AG04450 (cell line): ENCODE measurements at regions of chr12 and their contacts with region 1.

Region 1: GRCh38 chr12:52884526-52885293 is 20.2 kb downstream of the KRT8 start:
- DNase-seq: no peak
- H3K4me3 ChIP-seq: no peak overlapping the region
- H3K27ac ChIP-seq: no peak overlapping the region
- H3K27me3 ChIP-seq: no peaks in the 10 kb centered on the region
- CTCF ChIP-seq: peak; percentile 96

Region 2: DNA sequence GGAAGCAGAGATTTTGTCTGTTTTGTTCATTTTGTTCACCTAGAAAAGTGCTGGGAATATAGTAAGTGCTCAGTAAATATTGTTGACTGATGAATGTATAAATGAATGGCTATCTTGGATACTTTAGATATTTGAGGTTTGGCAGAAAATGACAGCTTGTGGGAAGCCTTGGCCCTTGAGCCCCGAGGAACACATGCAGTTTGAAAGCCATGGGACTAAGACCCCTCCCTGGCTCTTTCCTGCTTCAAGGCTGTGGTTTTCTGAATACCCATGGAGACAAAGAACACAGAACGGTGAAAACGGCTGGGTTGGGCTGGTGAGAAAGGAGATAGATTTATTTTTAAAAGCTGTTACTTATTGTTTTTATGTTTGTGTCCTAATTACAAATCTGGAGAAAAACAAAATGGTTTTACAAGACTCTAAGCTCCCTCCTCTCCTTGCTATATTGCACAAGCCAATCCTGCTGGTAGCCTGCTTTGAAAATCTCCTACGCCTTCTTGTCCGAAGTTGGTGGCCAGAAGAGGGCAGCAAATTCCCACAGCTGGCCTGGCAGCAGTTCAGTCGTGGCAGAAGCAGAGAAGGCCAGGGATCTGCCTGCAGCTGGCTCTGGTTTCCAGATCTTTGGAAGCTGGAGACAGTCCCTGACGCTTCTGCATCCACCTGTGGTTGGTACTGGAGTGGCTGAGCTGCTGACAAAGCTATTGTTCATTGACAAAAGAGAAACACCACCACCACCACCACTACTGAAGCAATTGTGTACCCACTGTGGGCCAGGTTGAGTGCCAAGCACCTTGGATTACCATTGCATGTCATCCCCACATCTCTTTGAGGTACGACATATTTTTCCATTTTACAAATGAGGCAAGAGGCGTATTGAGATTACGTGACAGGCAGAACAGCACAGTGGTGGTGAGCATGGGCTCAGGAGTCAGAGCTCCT is 512.2 kb before region 1 on chr12:
- CTCF ChIA-PET with region 1: interaction called, 134 read pairs
- POLR2A ChIA-PET with region 1: no interaction called
- DNase-seq: peak; percentile 72
- H3K4me3 ChIP-seq: no peak overlapping the region
- H3K27ac ChIP-seq: no peak overlapping the region
- H3K27me3 ChIP-seq: peaks cover 35% of the 10 kb centered on the region
- CTCF ChIP-seq: peak; percentile 89

Region 3: GRCh38 chr12:52901191-52902021 is 16.7 kb after region 1 on chr12:
- CTCF ChIA-PET with region 1: interaction called, 74 read pairs
- POLR2A ChIA-PET with region 1: no interaction called
- DNase-seq: no peak
- H3K4me3 ChIP-seq: no peak overlapping the region
- H3K27ac ChIP-seq: no peak overlapping the region
- H3K27me3 ChIP-seq: no peaks in the 10 kb centered on the region
- CTCF ChIP-seq: no peak

Region 4: GRCh38 chr12:52924764-52925716 is 40.3 kb after region 1 on chr12:
- CTCF ChIA-PET with region 1: interaction called, 27 read pairs
- POLR2A ChIA-PET with region 1: no interaction called
- DNase-seq: peak; percentile 62
- H3K4me3 ChIP-seq: no peak overlapping the region
- H3K27ac ChIP-seq: peak overlapping the region; percentile 91
- H3K27me3 ChIP-seq: no peaks in the 10 kb centered on the region
- CTCF ChIP-seq: no peak

Region 5: GRCh38 chr12:52956987-52957386 is 72.3 kb after region 1 on chr12:
- CTCF ChIA-PET with region 1: interaction called, 20 read pairs
- POLR2A ChIA-PET with region 1: no interaction called
- DNase-seq: no peak
- H3K4me3 ChIP-seq: no peak overlapping the region
- H3K27ac ChIP-seq: no peak overlapping the region
- H3K27me3 ChIP-seq: no peaks in the 10 kb centered on the region
- CTCF ChIP-seq: no peak